Right ventricle myocardium superior (tissue), 1 donor: ENCODE measurements at regions of chr12 and their contacts with region 1.

Region 1: GRCh38 chr12:53701518-53702260 is 25.6 kb downstream of the CALCOCO1 start:
- DNase-seq: peak; percentile 88
- ATAC-seq: peak; percentile 96

Region 2: DNA sequence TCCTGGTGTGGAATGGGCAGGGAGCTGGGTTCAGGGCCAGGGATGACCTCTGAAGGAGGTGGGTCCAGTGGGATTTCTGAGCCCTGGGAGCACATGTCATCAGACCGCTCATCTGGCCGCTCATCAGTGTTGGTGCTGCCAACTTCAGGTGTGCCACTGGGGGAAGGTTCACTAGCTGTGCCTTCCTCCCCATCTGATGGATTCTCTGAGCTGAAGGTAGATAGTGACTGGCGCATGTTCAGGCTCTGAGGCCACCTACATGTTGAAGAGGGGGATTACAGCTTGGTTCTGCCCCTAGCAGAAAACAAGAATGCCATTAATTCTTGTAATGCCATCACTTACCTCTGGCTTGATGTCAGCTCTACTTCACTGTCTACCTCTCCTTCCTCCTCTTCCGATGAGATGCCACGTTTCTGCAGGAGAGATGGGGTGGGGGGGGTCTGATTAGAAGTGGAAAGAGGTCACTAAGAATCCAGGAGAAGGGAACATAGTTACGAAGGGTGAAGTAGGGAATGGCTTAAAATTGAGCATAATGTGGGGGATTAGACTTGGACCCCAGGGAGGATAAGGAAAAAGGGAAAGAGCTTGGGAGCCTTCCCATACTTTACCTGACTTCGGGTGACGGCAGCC is 219.6 kb before region 1 on chr12:
- intact Hi-C with region 1: no loop called
- DNase-seq: no peak
- ATAC-seq: peak; percentile 19

Region 3: DNA sequence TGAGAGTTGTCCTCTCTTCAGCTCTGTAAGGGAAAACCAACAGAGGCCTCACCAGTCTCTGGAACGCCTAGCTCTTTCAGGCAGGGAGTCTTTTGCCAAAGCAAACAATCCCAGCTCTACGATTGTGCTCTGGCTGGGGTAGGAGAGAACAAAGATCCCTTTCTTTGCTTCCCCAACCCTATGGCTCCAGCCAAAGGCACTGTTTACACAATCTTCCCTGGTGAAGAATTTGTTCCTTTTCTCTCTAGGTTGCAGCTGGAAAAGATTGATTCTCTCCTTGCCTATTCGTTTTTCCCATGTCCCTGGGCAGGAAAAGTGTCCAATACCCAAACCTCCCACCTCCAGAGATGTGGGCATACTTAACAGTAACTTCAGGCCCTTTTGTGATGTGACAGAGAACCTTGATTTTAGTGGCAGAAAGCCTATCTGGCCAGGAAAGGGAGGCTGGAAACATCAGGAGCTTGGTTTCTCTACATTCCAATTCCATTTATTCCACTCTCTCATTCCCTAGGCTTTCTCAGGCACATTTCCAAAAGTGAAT is 42.6 kb before region 1 on chr12:
- intact Hi-C with region 1: no loop called
- DNase-seq: no peak
- ATAC-seq: peak; percentile 87

Region 4: DNA sequence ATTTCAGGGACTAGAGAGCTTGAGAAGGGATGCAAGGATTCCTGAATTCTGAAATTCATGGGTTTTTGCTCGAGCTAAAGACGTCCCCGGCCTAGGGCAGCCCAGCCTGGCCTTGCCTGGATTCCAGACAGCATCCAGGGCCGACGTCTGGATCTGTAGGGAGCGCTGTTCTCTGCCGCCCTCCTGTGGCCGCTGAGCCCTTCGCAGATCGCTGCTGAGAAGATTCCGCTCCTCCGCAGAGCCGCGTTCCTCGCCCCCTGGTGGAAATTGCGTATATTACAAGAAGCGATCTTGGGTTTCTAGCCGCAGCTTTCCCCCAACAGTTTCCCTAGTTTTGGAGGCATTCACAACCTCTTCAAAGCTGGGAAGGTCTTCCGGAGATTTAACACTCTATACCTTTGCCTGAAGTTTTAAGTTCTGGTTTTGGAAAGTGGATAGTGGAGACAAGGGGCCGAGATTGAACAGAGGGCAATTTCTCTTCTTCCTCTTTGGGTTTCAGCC is 45.0 kb after region 1 on chr12:
- intact Hi-C with region 1: loop called (anchors 1 kb)
- DNase-seq: peak; percentile 95
- ATAC-seq: peak; percentile 91

Region 5: DNA sequence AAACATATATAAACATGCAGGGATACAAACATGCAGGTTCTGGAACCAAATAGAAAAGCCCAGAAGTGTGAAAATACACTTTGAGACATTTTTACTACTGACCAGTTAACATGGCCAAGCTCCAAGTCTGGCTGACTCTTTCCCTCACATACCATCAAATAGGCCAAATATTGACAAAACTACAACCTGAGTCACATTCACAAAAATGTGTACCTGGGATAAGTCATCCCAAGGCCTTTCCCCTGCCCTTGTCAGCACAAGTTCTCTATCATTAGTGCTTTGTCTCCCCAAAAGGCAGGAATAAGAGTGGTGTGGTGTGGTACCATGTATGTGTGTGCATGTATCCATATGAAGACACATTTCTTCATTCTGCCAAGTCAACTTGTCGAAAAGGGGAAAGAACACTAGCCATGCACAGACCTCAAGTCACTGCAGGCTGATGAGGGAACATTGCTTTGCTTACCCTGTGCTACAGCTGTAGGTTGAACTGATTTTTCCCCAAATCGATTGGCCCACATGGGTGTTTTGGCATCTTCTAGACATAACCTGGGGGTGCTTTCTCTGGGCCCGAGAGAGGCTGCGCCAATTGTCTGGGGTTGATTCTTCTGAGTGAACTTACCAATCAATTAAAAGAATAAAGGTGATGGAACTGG is 366.9 kb after region 1 on chr12:
- intact Hi-C with region 1: no loop called
- DNase-seq: no peak
- ATAC-seq: no peak